Dendritic cell treated with granulocyte-macrophage colony-stimulating factor and Interleukin-4, amounts not matched to agents 40 ng/mL and 50 ng/mL, for 4 days (primary cell): ENCODE measurements at regions of chr2 and their contacts with region 1.

Region 1: DNA sequence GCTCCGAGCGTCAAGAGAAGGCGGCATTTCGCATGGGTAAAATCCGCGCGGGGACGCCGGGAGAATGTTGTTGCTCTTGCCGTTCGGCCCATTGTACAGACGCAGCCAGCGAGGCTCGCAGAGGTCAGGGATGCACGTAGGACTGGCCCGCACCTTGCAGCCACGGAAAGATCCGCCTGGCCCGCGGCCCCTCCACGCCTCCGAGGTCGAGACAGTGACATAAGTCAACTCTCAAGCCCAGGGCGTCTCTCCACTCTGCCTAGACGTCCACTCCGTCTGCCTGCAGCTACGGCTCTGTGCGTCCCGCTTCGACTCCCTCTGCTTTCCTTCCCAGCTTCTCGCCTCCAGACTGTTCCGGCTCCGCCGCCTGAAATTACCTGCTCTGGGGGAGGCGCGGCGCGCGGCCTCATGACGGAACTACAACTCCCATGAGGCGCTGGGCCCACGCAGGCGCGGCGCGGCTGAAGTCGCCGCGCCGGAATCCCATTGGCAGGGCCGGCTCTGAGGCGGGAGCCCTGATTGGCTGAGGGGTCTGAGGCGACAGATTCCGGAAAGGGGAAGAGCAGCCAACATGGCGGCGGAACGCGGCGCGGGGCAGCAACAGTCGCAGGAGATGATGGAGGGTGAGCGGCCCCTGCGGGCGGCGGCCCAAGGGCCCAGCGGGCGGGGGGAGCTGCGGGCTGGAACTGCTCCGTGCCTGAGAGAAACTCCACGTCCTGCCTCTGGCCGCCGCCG is at the start of gene PPP1R7:
- H3K4me3 Mint-ChIP-seq: peak within 1 kb of the TSS; percentile 85
- H3K27ac Mint-ChIP-seq: peak within 1 kb of the TSS; percentile 83
- H3K4me1 Mint-ChIP-seq: peaks cover 51% of the 10 kb centered on the region
- H3K27me3 Mint-ChIP-seq: peaks cover 8% of the 10 kb centered on the region

Region 2: DNA sequence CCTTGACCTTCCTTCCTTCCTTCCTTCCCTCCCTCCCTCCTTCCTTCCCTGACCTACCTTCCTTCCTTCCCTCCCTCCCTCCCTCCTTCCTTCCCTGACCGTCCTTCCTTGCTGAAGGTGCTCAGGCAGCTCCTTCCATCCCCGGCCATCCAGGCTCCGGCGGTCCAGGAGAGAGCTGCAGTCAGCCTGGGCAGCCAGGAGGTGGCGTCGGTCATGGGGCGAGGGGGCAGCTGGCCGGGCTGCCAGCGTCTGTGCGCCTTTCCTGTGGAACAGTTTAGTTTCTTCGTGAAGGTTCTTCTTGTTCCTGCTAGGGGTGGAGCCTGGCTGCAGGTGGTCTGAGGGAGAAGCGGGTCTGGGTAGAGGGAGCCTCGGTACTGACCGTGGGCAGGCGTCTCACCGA is 509.2 kb before region 1 on chr2:
- intact Hi-C with region 1: no loop called
- H3K4me3 Mint-ChIP-seq: no peak overlapping the region
- H3K27ac Mint-ChIP-seq: no peak overlapping the region
- H3K4me1 Mint-ChIP-seq: peaks cover 13% of the 10 kb centered on the region
- H3K27me3 Mint-ChIP-seq: peaks cover 27% of the 10 kb centered on the region

Region 3: GRCh38 chr2:241102239-241102803 is 47.8 kb before region 1 on chr2 and contains the start of gene MTERF4:
- intact Hi-C with region 1: loop called (anchors 5 kb)
- H3K4me3 Mint-ChIP-seq: peak within 1 kb of the TSS; percentile 93
- H3K27ac Mint-ChIP-seq: peak within 1 kb of the TSS; percentile 91
- H3K4me1 Mint-ChIP-seq: peaks cover 25% of the 10 kb centered on the region
- H3K27me3 Mint-ChIP-seq: no peaks in the 10 kb centered on the region

Region 4: GRCh38 chr2:241514986-241515737 is 365.1 kb after region 1 on chr2:
- intact Hi-C with region 1: loop called (anchors 5 kb)
- H3K4me3 Mint-ChIP-seq: no peak overlapping the region
- H3K27ac Mint-ChIP-seq: no peak overlapping the region
- H3K4me1 Mint-ChIP-seq: no peaks in the 10 kb centered on the region
- H3K27me3 Mint-ChIP-seq: peaks cover 45% of the 10 kb centered on the region